CD8-positive, alpha-beta T cell (primary cell): ENCODE measurements at regions of chr19 and their contacts with region 1.

Region 1: GRCh38 chr19:52853880-52854279 is 3.5 kb downstream of the ZNF468 start:
- DNase-seq: no peak
- ATAC-seq: no peak
- H3K4me3 ChIP-seq: no peak overlapping the region
- H3K4me3 Mint-ChIP-seq: no peak overlapping the region
- H3K27ac ChIP-seq: no peak overlapping the region
- H3K27ac Mint-ChIP-seq: no peak overlapping the region
- H3K4me1 ChIP-seq: peaks cover 5% of the 10 kb centered on the region
- H3K4me1 Mint-ChIP-seq: peaks cover 29% of the 10 kb centered on the region
- H3K27me3 ChIP-seq: no peaks in the 10 kb centered on the region
- H3K27me3 Mint-ChIP-seq: no peaks in the 10 kb centered on the region
- CTCF ChIP-seq: no peak

Region 2: DNA sequence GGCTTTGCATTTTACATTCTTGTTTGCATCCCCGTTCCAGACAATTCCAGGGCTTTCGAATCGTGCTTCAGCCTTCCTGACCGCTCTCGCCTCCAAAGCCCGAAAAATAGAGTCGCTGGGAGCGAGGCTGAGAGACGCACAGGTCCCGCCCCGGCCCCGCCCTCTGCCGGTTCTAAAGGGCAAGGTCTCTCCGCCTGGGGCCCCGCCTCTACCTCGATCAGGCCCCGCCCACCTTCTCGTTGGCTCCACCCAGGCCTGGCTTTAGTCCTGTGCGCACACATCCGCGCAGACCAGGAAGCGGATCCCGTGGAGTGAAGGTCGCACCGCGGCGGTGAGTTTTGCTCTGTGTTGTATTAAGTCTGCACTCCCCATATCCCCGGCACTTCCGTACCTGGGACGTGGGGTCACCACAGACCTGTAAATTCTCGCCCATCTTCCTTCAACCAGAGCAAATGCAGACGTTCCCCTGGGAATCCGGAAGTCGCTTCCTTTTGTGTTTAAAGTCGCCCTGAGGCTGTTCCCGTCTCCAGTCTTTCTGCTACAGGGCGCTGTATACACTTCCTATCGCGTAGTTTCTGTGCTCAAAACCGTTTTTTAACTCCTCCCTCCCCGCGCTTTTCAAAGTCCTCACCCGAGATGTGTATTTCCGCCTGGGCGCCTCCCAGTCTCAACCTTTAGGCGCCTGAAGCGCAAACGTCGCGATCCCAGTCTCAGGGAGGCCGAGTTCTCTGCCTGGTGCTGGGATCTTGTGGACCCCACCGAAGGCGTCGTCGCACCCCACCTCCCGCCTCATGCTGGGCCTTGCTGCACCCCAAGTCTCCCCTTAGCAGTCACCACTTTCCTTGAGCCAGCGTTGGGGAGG is 283.6 kb before region 1 on chr19 and contains the start of gene ZNF701:
- CTCF ChIA-PET with region 1: no interaction called
- POLR2A ChIA-PET with region 1: no interaction called
- intact Hi-C with region 1: no loop called
- DNase-seq: peak; percentile 93 to 97 (median 95)
- ATAC-seq: peak; percentile 98
- H3K4me3 ChIP-seq: peak within 1 kb of the TSS; percentile 81 to 96
- H3K4me3 Mint-ChIP-seq: peak within 1 kb of the TSS; percentile 90
- H3K27ac ChIP-seq: peak within 1 kb of the TSS; percentile 77 to 91
- H3K27ac Mint-ChIP-seq: peak within 1 kb of the TSS; percentile 93
- H3K4me1 ChIP-seq: peaks cover 12% of the 10 kb centered on the region
- H3K4me1 Mint-ChIP-seq: peaks cover 42% of the 10 kb centered on the region
- H3K27me3 ChIP-seq: no peaks in the 10 kb centered on the region
- H3K27me3 Mint-ChIP-seq: no peaks in the 10 kb centered on the region
- CTCF ChIP-seq: peak; percentile 30
- total RNA-seq, gene ZNF701: 11.2 to 11.9 TPM

Region 3: DNA sequence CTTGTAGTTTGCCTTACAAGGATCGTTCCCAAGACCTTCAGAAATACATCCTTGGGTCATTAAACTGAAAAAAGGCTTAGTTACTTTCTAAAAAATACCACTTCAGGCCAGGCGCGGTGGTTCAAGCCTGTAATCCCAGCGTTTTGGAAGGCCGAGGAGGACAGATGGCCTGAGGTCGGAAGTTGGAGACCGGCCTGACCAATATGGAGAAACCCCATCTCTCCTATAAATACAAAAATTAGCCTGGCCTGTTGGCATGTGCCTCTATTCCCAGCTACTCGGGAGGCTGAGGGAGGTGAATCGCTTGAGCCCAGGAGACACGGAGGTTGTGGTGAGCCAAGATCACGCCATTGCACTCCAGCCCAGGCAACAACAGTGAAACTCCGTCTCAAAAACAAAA is 30.2 kb before region 1 on chr19:
- CTCF ChIA-PET with region 1: no interaction called
- POLR2A ChIA-PET with region 1: no interaction called
- intact Hi-C with region 1: loop called (anchors 1 to 2 kb)
- DNase-seq: no peak
- ATAC-seq: no peak
- H3K4me3 ChIP-seq: no peak overlapping the region
- H3K4me3 Mint-ChIP-seq: no peak overlapping the region
- H3K27ac ChIP-seq: no peak overlapping the region
- H3K27ac Mint-ChIP-seq: no peak overlapping the region
- H3K4me1 ChIP-seq: peaks cover 7% of the 10 kb centered on the region
- H3K4me1 Mint-ChIP-seq: peaks cover 20% of the 10 kb centered on the region
- H3K27me3 ChIP-seq: no peaks in the 10 kb centered on the region
- H3K27me3 Mint-ChIP-seq: no peaks in the 10 kb centered on the region
- CTCF ChIP-seq: no peak

Region 4: DNA sequence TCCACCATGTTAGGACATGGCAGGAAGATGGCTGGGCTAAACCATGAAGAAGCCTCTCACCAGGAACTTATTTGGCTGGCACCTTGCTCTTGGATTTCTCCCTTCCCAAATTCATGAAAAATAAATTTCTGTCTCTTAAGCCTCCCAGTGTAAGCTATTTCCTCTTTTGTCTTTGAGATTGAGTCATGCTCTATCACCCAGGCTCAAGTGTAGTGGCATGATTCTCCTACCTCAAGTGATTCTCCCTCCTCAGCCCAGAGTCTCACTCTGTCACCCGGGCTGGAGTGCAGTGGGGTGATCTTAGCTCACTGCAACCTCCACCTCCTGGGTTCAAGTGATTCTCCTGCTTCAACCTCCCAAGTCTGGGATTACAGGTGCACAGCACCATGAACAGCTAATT is 56.8 kb after region 1 on chr19:
- CTCF ChIA-PET with region 1: no interaction called
- POLR2A ChIA-PET with region 1: no interaction called
- intact Hi-C with region 1: no loop called
- DNase-seq: no peak
- ATAC-seq: no peak
- H3K4me3 ChIP-seq: no peak overlapping the region
- H3K4me3 Mint-ChIP-seq: no peak overlapping the region
- H3K27ac ChIP-seq: no peak overlapping the region
- H3K27ac Mint-ChIP-seq: no peak overlapping the region
- H3K4me1 ChIP-seq: no peaks in the 10 kb centered on the region
- H3K4me1 Mint-ChIP-seq: no peaks in the 10 kb centered on the region
- H3K27me3 ChIP-seq: no peaks in the 10 kb centered on the region
- H3K27me3 Mint-ChIP-seq: no peaks in the 10 kb centered on the region
- CTCF ChIP-seq: no peak

Region 5: DNA sequence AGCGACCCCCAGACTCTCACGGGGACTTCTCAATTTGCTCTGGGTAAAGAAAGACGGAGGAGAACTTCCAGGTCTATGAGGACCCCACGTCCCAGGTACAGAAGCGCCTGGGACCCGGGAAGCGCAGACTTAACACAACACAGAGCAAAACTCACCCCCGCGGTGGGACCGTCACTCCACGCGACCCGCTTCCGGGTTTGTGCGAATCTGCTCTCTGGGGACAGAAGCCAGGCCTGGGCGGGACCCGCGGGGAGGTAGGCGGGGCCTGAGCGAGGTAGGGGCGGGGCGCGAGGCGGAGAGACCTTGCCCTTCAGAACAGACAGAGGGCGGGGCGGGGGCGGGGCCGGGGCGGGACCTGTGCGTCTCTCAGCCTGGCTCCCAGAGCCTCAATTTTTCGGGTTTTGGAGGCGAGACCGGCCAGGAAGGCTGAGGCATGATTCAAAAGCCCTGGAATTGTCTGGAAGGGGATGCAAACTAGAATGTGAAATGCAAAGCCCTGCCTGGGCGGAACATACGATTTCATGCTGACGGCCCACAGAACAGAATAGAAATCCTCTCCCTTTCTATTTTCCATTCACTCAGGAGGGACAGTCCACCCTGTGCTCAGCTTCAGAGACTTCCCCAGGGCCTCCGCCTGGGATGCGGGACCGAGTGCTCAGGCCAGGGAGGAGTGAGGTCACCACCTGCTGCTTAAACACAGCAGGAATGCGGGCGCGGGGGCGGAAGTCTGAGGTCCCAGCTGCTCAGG is 88.7 kb after region 1 on chr19:
- CTCF ChIA-PET with region 1: no interaction called
- POLR2A ChIA-PET with region 1: no interaction called
- intact Hi-C with region 1: loop called (anchors 1 to 5 kb)
- DNase-seq: peak; percentile 91 to 97 (median 95)
- ATAC-seq: peak; percentile 99
- H3K4me3 ChIP-seq: peak overlapping the region; percentile 88 to 91
- H3K4me3 Mint-ChIP-seq: peak overlapping the region; percentile 95
- H3K27ac ChIP-seq: peak overlapping the region; percentile 66 to 86
- H3K27ac Mint-ChIP-seq: peak overlapping the region; percentile 93
- H3K4me1 ChIP-seq: peaks cover 7% of the 10 kb centered on the region
- H3K4me1 Mint-ChIP-seq: peaks cover 28% of the 10 kb centered on the region
- H3K27me3 ChIP-seq: no peaks in the 10 kb centered on the region
- H3K27me3 Mint-ChIP-seq: no peaks in the 10 kb centered on the region
- CTCF ChIP-seq: no peak